Posterior cingulate gyrus (tissue), 11 donors: ENCODE measurements at regions of chr5 and their contacts with region 1.

Region 1: GRCh38 chr5:14142827-14143548 is at the start of gene TRIO:
- DNase-seq: peak; percentile 87 to 98 (median 90)

Region 2: GRCh38 chr5:14168144-14168792 is 25.3 kb after region 1 on chr5:
- intact Hi-C with region 1: no loop called
- DNase-seq: no peak

Region 3: DNA sequence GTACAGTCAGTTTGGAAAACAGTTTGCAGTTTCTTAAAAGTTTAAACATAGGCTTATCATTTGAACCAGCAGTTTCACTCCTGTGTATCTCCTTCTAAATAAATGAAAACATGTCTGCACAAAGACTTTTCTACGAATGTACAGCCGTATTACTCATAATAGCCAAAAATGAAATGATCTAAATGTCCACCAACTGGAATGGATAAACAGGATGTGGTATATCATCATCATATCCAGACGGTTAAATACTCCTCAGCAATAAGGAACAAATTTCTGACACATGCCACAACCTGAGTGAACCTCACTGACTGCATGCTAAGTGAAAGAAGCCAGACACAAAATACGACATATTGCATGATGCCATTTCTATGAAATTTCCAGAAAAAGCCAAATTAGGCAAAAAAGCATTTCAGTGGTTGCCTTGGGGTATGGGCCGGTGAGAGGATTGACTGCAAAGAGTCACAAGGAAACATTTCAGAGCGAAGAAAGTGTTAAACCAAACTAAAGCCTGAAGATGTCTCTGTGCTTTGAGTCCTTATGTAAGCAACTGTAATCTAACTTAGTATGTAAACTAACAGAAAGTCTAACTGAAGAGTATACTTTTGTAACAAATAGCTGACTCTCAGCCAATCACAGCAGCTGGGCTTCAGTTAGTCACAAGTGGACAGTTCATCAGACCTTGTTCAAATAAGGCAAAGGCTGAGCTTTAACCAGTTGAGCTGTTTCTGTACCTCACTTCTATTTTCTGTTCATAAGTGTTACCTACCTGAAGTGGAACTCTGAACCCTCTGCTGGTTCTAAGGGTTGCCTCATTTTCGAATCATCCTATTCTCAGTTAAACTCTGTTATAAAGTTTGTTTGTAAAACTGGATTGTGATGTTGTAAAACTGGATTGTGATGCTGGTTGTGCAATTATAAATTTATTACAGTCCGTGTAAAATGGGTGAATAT is 65.4 kb after region 1 on chr5:
- intact Hi-C with region 1: loop called (anchors 10 kb)
- DNase-seq: no peak

Region 4: DNA sequence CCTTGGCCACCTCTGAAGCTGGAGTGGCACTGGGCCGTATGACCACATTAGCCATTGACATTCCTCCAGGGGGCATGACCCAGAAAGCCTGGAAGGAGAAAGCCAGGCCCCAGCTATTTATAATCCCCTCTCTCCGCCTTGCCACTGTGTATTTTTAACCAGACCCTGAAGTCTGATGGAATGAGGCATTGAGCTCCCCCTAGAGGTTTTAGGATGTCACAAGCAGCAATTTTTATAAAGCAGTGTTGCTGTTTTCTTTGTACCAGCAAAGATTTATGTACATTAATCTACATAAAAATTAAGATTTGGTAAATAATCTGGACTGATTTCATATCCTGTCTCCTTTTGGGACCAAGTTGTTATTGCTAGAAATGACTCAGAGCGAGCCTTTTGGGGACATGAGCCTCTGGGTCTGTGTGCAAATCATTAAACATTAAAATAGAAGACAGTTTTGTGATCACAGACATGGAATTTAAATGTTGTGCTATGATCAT is 127.3 kb after region 1 on chr5:
- intact Hi-C with region 1: loop called (anchors 2 kb)
- DNase-seq: no peak

Region 5: DNA sequence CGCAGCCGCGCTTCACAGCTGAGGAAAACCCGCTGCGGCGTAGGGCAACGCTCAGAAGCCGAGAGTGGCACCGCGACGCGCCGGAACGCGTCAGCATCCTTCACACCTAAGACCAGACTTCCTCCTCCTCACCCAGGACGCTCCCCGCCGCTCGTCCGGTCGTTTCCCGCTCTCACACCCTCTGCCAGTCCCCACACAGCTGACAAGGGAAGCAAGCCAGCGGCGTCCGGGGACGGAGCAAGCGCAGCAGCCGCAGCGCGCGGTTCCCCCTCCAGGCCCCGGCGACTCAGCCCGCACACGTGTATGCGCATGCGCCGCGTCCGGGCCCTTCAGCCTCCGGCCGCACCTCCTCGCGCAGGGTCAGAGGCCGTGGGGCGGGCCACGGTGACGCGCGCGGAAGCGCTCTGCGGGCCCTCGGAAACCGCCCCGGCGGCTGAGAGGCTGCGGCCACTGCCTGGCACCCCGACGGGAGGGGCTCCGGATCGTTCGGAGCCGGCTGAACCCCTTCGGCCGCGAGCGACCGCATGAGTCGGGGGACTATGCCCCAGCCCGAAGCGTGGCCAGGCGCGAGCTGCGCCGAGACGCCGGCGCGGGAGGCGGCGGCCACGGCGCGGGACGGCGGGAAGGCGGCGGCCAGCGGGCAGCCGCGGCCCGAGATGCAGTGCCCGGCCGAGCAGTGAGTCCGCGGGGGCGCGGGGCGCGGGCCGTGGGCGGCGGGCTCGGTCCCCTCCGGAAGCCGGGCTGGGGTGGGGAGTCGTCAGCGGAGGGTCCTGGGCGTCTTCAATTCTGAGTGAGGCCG is 521.5 kb after region 1 on chr5 and contains the start of gene OTULIN:
- intact Hi-C with region 1: loop called (anchors 10 kb)
- DNase-seq: peak; percentile 83 to 98 (median 88)